Left colon (tissue), 2 donors: ENCODE measurements at regions of chr5 and their contacts with region 1.

Region 1: DNA sequence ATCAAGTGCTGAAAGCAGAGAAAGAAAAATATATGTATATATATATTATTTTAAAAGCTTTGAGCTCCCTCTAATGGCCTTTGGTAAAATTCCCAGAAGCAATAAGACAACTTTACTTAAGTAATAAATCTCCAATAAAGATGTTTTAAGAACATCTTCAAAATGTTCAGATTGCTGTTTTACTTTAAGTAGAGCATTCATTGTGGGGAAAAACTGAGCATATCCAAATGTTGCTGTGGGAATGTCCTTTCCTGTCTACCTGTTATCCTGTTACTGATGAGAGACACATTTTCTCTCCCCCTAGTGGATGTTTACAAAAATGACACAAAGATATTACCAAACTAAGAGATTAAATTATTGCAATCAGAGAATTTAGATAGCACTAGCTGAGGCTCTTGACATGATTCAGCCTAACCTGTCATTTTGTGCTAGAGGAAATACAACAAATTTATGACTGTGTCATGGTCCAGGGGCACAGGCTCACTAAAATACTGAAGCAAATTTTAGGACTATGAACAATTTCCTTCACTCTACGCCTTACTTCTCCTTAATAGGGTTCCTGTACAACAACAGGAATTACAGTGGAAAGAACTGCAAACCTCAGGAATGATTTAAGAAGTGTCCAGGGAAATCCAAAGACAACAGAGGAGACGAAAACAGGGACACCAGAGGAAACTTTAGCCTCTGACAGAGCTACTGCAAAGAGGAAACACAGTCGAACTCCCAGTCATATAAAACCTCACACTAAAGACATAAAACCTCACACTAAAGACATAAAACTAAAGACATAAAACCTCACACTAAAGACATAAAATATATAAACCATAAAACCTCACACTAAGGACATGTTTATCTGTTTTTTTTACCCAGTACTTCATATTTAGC is 24.3 kb upstream of the PRRC1 start:
- DNase-seq: no peak
- ATAC-seq: peak; percentile 96

Region 2: DNA sequence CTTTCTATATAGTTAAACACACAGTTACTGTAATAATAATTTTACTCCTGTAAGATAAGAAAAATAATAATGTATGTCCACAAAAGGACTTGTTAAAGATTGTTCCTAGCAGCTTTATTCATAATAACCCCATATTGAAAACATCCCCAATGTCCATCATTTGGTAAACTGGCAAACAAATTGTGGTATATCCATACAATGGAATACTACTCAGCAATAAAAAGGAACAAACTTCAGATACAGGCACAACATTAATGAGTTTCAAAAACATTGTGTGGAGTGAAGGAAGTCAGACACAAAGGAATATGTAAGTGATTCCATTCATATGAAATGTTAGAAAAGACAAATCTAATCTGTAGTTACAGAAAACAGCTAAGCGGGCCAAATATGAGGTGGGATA is 204.4 kb before region 1 on chr5:
- intact Hi-C with region 1: loop called in 1 of 2 experiments (anchors 5 kb)
- DNase-seq: no peak
- ATAC-seq: no peak

Region 3: DNA sequence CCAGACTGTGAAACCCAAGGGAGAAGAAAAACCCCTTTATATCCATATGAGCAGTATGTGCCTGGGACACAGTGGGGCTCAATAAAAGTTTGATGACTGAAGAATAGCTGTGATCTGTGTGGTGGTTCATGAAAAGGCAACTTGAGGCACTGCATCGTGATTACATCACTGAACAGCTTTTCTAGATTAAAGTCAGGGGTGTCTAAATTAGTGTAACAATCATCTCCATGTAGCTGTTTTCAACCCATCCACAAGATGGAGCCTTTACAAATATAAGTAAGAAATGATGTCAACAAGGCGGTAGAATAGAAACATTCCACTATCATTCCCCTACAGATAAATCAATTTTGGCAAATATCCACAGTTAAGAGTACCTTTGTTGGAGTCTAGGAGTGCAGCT is 79.8 kb after region 1 on chr5:
- intact Hi-C with region 1: no loop called
- DNase-seq: no peak
- ATAC-seq: no peak